BJ (cell line): ENCODE measurements at regions of chr2 and their contacts with region 1.

Region 1: DNA sequence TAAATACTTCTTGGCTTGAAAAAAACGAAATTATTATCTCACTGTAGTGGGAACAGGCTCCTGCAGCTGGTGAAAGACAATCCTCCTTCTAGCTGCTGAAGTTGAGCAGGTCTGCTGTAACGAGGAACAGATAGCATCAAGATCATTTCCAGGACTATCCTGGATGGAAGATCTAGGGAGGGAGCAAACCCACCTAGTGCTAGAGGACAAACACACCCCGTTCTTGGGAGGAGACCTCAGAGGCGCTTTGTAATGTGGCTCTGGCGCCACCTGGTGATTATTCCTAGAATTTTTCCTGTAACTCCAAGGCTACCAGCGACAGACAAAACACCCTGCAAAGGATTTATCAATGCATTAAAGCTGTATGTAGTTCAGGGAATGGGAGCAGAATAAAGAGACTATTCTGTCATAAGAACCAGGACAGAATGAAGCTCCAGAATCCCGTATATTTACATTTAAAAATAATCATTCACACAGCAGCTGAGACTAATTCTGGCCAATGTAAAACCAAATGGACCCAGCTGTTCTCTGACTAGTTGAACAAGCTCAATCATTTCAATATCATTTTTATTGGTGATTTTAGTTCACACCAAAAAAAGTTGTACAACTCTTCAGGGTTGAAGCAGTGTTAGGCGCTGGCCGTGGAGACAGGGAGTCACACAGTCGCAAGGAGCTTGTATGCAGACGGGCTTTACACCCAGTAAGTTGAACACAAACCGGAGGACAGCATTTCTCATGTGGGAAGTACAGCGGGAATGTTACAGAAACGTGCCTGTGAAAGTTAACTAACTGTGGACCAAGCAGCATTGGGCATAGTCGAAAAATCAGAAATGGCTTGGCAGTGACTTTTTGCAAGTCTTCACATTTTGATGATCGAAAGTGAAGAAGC is 290.3 kb downstream of the TRIB2 start:
- DNase-seq: peak; percentile 9
- H3K4me3 ChIP-seq: no peak overlapping the region
- H3K27me3 ChIP-seq: no peaks in the 10 kb centered on the region
- CTCF ChIP-seq: peak; percentile 75

Region 2: DNA sequence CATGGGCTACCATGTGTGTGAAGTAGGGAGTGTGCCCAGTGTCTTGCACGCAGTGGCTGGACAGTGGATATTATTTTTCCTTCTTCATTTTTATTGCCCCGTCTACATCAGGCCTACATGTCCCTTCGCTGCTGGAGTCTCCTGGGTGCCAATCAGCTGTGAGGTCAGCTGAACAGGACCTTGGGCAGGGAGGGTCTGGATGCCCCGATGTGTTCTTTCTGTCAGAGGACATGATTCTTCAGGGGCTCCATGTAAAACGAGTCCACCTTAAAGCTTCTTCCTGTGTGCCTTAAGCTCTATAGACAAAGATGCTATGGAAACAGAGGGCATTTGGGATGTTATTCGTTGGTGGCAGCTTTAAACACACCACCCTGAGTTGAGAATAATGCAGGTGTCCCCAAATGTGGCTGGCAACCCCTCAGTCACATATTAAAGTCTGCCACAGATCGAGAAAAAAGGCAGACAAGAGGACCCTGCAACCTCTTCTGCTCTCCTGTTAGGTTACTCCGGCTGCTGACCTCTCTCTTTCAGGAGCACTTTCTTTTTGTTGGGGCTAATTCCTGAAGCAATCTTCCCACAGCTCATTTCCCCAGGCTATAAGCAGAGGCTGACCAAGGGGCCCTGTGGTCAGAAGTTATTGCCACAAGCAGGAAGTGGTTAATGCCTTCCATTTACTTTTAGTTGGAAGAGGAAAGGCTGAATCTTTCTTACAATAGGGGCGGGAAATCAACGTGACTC is 1453.2 kb before region 1 on chr2:
- CTCF ChIA-PET with region 1: no interaction called
- POLR2A ChIA-PET with region 1: no interaction called
- DNase-seq: no peak
- H3K4me3 ChIP-seq: no peak overlapping the region
- H3K27me3 ChIP-seq: peaks cover 17% of the 10 kb centered on the region
- CTCF ChIP-seq: no peak

Region 3: GRCh38 chr2:11829947-11830707 is 1176.9 kb before region 1 on chr2:
- CTCF ChIA-PET with region 1: interaction called, 30 read pairs
- POLR2A ChIA-PET with region 1: no interaction called
- DNase-seq: peak; percentile 86
- H3K4me3 ChIP-seq: no peak overlapping the region; the same call in 1 of the 2 replicates
- H3K27me3 ChIP-seq: no peaks in the 10 kb centered on the region
- CTCF ChIP-seq: peak; percentile 50

Region 4: DNA sequence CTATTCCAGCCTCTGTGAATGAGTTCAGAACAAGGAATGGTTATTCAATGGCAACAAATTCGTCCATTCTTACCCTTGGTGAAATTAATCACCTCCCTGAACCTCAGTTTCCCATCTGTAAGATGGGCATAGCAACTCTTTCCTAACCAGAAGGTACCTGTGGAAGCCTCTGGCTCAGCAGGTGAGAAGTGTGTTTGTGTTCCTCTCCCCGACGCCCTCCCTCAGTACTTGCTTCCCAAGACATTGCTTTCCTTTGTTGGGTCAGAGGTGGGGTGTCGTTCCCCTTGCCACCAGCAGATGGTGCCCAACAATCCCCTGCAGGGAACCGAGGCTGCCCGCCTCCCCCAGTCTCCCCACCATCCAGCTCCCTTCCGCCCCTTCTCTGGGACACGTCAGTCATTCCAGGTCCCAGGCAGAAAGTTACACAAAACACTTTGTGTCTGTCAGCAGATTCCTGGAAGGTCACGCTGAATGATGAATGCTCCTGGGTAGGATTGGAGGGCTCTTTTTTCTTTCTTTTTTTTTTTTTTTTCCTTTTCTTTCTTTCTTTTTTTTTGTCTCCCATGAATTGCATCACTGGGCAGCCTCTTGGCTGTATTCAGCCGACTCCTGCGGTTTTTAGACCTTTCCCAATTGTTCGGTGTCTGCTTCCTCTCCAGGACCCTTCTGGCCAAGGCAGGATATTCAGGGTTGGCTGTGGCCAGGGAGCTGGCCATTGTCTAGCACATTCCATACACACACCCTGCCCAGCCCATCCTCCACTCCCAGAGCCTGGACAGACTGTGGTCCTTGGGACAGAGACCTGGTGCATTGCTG is 1143.4 kb before region 1 on chr2:
- CTCF ChIA-PET with region 1: interaction called, 17 read pairs
- POLR2A ChIA-PET with region 1: no interaction called
- DNase-seq: peak; percentile 54
- H3K4me3 ChIP-seq: no peak overlapping the region
- H3K27me3 ChIP-seq: no peaks in the 10 kb centered on the region; the same call in 1 of the 2 replicates
- CTCF ChIP-seq: peak; percentile 97

Region 5: GRCh38 chr2:11988691-11989353 is 1018.3 kb before region 1 on chr2:
- CTCF ChIA-PET with region 1: no interaction called
- POLR2A ChIA-PET with region 1: no interaction called
- DNase-seq: no peak
- H3K4me3 ChIP-seq: no peak overlapping the region
- H3K27me3 ChIP-seq: peaks cover 3% of the 10 kb centered on the region
- CTCF ChIP-seq: no peak

Region 6: DNA sequence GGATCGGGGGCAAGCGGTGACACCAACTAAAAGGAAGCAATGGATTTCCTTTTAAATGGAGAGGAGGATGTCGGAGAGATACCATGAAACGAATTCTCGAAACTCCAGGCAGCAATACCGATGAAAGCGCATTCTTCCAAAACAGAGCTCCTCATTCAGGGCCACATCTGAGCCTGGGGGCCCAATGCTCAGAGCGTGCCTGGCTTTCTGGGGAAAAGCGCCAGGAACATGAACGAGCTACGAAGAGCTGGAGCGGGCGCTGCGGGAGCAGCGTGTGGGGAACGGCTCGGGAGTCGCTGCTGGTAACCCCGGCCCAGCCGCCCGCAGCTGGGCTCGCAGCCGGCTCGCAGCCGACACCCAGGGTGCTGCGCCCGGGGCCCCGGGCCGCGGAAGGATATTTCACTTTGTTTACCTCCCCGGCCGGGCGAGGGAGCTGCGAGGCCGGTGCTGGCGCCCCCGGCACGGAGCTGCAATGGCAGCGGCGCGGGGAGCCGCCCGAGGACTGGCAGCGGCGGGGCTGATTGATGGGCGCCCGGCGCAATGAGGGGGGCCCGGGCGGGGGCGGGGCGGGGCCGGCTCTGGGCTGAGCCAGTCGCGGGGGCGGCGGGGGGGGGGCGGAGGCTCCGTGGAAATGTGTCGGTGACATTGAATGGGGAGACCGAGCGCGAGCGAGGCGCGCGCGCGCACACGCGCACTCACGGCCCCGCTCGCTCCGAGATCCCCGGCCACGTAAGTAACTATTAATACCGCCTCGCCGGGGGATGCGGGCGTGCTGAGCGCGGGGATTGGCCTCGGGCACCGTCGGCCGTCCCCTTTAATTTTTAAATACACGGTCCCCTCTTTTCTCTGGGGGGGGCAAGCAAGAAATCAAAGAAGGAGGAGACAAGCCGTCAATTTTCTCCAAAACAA is 290.5 kb before region 1 on chr2 and contains the start of gene TRIB2:
- CTCF ChIA-PET with region 1: interaction called, 25 read pairs
- POLR2A ChIA-PET with region 1: no interaction called
- DNase-seq: no peak
- H3K4me3 ChIP-seq: peak within 1 kb of the TSS; percentile 77
- H3K27me3 ChIP-seq: no peaks in the 10 kb centered on the region
- CTCF ChIP-seq: no peak
- polyA plus RNA-seq, gene TRIB2: 11.0 and 12.5 TPM in 2 replicates

Region 7: DNA sequence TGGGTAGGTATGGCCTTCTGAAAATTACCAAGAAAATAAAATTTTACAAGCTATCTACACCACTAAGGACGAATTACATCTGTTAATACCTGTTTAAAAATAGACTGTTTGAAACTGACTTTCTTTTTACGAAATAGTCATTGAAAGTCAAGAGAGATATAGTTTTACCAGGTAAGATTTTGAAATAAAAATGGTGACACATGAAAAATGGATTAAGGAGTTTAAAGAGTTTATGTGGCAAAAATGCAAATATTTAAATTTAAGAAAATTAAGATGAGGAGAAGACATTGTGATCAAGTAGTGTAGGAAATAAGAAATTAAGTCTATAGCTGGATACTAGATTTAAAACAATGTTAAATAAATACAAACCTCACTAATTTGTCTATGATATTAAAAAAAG is 18.8 kb before region 1 on chr2:
- CTCF ChIA-PET with region 1: interaction called, 11 read pairs
- POLR2A ChIA-PET with region 1: no interaction called
- DNase-seq: no peak
- H3K4me3 ChIP-seq: no peak overlapping the region
- H3K27me3 ChIP-seq: no peaks in the 10 kb centered on the region
- CTCF ChIP-seq: no peak

Region 8: DNA sequence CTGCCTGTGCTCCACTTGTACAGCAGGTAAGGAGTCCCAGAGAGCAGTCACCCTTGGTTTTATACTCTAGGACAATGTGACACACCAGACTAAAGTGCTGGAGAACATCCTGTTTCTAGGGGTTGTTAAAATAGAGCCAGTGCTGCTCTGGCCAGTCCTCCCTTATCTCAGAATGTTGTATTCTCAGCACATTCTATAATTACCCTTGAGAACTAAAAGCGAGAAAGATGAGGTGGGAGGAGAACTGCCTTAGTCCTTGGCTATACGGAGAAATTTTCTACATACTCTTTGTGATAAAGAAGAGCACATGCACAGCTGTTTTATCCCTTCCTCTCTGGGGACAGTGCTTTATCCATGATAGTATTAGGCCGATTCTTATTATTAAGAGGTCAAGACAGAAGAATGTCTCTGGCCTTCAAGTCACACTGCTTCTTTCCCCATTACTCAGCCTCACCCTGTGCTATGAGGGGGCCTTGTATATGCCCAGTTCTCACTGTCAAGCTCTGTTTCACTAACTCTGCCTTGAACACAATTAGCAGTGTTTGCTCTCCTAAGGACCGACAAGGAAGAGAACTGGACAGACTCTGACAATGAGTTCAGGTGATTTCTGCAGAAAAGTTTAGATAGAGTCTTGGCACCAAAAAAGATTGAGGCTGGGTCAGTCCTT is 95.5 kb after region 1 on chr2:
- CTCF ChIA-PET with region 1: no interaction called
- POLR2A ChIA-PET with region 1: no interaction called
- DNase-seq: no peak
- H3K4me3 ChIP-seq: no peak overlapping the region
- H3K27me3 ChIP-seq: no peaks in the 10 kb centered on the region
- CTCF ChIP-seq: no peak